ENCODE measurements at regions of chr4 and their contacts with region 1.

Region 1: GRCh38 chr4:6640292-6641163 is at the start of gene MRFAP1:
- DNase-seq: peak; percentile 95
- ATAC-seq: peak; percentile 82
- H3K4me3 Mint-ChIP-seq: peak within 1 kb of the TSS; percentile 89
- H3K27ac Mint-ChIP-seq: peak within 1 kb of the TSS; percentile 94
- H3K4me1 Mint-ChIP-seq: peaks cover 18% of the 10 kb centered on the region
- H3K27me3 Mint-ChIP-seq: no peaks in the 10 kb centered on the region
- total RNA-seq, gene MRFAP1: 123 to 128 TPM

Region 2: DNA sequence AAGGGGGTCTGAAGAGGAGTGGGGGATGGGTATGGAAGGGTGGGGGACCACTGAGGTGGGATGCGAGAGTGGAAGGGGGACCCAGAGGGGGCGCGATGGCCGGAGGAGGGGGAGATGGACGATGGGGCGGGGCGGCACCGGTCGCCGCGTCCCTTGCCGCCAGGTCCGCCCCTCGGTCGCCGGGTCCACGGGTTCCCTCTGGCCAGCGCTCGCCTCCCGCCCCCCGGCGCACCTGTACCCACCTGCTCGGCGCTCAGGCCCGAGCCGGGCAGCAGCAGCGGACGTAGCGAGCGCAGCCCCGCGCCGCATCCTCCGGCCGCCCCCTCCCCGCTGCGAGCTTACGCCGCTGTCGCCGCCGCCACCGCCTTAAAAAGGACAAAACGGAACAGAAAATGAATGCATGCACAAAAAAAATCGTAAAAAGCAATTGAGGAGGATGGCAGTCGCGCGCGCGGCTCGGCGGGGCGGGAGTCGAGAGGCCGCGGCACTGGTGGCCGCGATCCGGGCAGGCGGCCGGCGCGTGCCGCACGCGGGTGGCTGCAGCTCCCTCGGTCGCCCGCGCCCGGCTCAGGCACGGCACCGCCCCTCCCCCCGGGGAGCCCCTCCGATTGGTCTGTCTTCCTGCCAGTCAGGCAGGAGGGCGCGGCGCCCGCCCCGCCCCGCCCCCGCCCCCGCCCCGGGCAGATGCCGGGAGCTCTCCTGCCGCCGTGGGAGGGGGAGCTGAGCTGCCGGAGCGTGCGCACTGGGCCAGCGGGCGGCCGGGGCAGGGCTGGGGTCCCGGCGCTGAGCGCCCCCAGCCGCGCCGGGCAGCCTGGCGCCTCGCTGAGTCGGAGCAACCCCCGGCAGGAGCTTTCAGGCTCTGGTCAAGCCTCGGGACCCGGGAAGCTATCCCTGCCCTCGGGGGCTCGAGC is 440.3 kb before region 1 on chr4 and contains the start of gene JAKMIP1:
- POLR2A ChIA-PET with region 1: no interaction called
- DNase-seq: peak; percentile 86
- ATAC-seq: peak; percentile 67
- H3K4me3 Mint-ChIP-seq: peak within 1 kb of the TSS; percentile 78
- H3K27ac Mint-ChIP-seq: peak within 1 kb of the TSS; percentile 80
- H3K4me1 Mint-ChIP-seq: peaks cover 22% of the 10 kb centered on the region
- H3K27me3 Mint-ChIP-seq: peaks cover 44% of the 10 kb centered on the region
- total RNA-seq, gene JAKMIP1: 5.3 to 5.9 TPM

Region 3: GRCh38 chr4:6574747-6575502 is 65.6 kb before region 1 on chr4 and contains the start of gene MAN2B2:
- POLR2A ChIA-PET with region 1: interaction called, 15 read pairs
- DNase-seq: peak; percentile 91
- ATAC-seq: peak; percentile 91
- H3K4me3 Mint-ChIP-seq: peak within 1 kb of the TSS; percentile 87
- H3K27ac Mint-ChIP-seq: peak within 1 kb of the TSS; percentile 83
- H3K4me1 Mint-ChIP-seq: peaks cover 9% of the 10 kb centered on the region
- H3K27me3 Mint-ChIP-seq: no peaks in the 10 kb centered on the region
- total RNA-seq, gene MAN2B2: 36.0 to 38.2 TPM

Region 4: DNA sequence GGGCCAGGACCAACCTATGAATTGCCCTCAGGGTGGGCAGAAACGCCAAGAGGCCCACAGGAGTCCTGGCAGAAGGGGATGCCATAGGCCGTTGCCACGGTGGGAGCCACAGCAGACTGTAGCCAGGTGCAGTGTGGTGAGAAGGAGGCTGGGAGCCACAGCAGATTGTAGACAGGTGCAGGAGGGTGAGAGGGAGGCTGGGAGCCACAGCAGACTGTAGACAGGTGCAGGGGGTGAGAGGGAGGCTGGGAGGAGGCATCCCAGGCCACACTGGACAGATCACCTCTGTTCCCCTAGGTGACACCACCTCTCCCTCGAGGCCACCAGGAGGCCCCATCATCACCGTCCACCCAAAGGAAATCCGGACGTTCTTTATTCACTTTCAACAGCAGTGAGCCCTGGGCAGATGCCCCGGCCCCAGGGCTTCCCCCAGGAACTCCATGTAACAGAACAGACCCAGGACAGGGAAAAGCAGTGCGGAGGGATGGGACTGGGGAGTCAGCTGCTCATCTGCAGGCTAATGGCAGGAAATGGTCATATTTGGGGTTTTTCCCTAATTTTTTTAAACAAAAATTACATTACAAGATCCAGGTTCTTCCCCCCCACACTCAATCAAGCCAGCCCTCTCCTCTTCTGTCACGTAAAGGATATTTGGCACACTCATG is 19.5 kb before region 1 on chr4:
- POLR2A ChIA-PET with region 1: no interaction called
- DNase-seq: no peak
- ATAC-seq: no peak
- H3K4me3 Mint-ChIP-seq: no peak overlapping the region
- H3K27ac Mint-ChIP-seq: no peak overlapping the region
- H3K4me1 Mint-ChIP-seq: no peaks in the 10 kb centered on the region
- H3K27me3 Mint-ChIP-seq: no peaks in the 10 kb centered on the region

Region 5: DNA sequence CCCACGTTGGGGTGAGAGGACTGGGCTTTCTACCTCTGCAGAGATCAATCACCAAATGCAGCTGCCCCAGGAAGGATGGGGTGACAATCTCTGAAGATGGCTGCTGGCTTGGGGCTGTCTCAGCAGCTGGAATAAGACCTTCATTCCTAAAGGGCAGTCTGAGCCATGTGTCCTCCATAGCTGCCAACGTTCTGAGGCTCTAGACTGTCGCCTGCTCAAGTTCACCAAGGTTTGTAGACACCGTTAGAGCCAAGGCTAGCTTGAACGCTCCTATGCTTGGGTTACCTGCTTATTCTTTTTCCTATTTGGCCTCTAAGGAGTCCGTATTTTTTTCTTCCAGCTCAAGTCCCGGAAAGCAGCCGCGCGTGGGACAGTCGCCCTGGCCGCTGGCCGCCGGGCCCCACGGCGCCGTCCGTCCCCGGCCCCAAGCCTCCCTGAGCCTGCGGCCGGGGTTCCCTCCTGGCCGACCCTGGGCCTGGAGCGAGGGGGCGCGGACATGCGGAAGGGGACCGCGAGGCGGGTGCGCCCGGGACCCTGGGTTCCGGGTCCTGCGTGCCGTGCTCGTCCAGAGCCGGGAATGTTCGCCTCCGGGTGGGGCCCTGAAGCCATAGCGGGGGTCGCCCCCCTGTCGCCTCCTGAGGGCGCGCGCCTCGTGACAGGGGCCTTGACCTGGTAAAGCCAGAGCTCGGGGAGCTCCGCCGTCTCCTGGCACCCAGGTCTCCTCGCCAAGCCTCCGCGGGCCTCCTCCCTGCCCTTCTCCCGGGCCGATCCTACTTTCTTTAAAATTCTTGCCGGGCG is 23.3 kb after region 1 on chr4:
- POLR2A ChIA-PET with region 1: interaction called, 19 read pairs
- DNase-seq: no peak
- ATAC-seq: peak; percentile 13
- H3K4me3 Mint-ChIP-seq: peak overlapping the region; percentile 63
- H3K27ac Mint-ChIP-seq: no peak overlapping the region
- H3K4me1 Mint-ChIP-seq: peaks cover 3% of the 10 kb centered on the region
- H3K27me3 Mint-ChIP-seq: peaks cover 44% of the 10 kb centered on the region

Region 6: GRCh38 chr4:6688879-6689505 is 48.5 kb after region 1 on chr4:
- POLR2A ChIA-PET with region 1: interaction called, 28 read pairs
- DNase-seq: peak; percentile 82
- ATAC-seq: peak; percentile 77
- H3K4me3 Mint-ChIP-seq: peak overlapping the region; percentile 87
- H3K27ac Mint-ChIP-seq: peak overlapping the region; percentile 92
- H3K4me1 Mint-ChIP-seq: peaks cover 61% of the 10 kb centered on the region
- H3K27me3 Mint-ChIP-seq: no peaks in the 10 kb centered on the region

Region 7: DNA sequence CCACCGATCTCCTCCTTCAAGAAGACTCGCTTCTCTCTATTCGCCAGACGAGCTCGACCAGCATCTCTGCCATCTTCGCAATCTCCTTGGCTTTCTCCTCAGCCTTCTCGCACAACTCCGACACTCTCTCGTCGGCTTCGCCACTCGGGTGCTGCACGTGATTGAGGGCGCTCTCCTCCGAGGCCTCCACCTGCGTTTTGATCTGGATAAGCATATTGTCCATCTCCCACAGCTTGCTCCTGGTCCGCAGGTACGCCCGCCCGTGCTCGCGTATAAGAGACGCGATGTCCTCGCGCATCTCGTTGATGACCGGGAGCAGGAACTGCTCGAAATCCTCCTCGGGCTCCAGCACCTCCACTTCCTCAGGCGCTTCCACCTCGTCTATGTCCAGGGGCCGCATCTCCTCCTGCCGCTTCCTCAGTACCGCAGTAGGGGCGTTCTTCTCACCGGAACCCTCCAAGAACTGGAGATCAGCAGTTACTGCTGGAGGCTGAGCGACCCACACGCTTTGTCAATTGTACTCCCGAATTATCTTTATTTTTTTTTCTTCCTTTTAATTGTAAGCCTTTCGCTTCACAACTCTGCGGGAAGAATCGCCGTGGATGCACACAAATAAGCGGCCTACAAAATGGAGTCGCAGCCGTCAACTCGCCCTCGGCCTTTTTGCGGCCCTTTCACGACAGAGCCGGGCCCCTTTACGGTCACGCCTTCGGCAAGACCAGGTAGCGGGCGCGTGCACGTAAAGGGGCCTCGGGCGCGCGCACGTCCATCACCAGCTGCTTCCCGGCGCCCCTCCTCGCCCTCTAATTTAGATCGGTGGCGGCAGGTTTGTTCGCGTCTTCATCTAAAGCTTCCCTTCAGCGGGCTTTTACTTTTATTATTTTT is 68.9 kb after region 1 on chr4 and contains the start of gene MRFAP1L1:
- POLR2A ChIA-PET with region 1: interaction called, 21 read pairs
- DNase-seq: peak; percentile 95
- ATAC-seq: peak; percentile 76
- H3K4me3 Mint-ChIP-seq: peak within 1 kb of the TSS; percentile 97
- H3K27ac Mint-ChIP-seq: peak within 1 kb of the TSS; percentile 99
- H3K4me1 Mint-ChIP-seq: peaks cover 48% of the 10 kb centered on the region
- H3K27me3 Mint-ChIP-seq: peaks cover 4% of the 10 kb centered on the region
- total RNA-seq, gene MRFAP1L1: 74.6 to 80.0 TPM

Region 8: DNA sequence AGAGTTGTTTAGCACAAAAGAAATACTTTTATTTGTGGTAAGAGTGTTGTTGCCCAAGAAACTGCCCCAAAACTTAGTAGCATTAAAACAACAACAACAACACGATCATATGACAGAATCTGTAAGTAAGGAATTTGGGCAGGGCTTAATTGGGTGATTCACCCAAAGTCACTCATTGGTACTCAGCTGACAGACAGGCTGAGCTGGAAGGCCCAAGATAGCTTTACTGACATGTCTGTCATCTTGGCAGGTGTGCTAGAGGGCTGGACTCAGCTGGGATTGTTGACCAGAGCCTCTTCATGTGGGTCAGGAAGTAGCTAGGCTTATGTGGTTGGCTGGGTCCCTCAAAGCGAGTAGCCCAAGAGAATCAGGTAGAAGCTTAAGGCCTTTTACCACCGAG is 194.3 kb after region 1 on chr4:
- POLR2A ChIA-PET with region 1: no interaction called
- DNase-seq: no peak
- ATAC-seq: no peak
- H3K4me3 Mint-ChIP-seq: no peak overlapping the region
- H3K27ac Mint-ChIP-seq: no peak overlapping the region
- H3K4me1 Mint-ChIP-seq: peaks cover 3% of the 10 kb centered on the region
- H3K27me3 Mint-ChIP-seq: no peaks in the 10 kb centered on the region

Measured in activated naive CD8-positive, alpha-beta T cell treated with anti-CD3 and anti-CD28 coated beads, Interleukin-2, amount 10 ng/mL, durations not matched to agents 7 days and 5 days (primary cell).